ENCODE measurements at regions of chr12 and their contacts with region 1.

Region 1: GRCh38 chr12:110600254-110600653 is 13.7 kb upstream of the TCTN1 start:
- H3K4me3 ChIP-seq: no peak overlapping the region
- H3K27ac ChIP-seq: no peak overlapping the region
- H3K4me1 ChIP-seq: no peaks in the 10 kb centered on the region
- CTCF ChIP-seq: no peak

Region 2: GRCh38 chr12:110449799-110450497 is 150.3 kb before region 1 on chr12 and contains the start of gene ARPC3:
- CTCF ChIA-PET with region 1: interaction called, 51 read pairs
- POLR2A ChIA-PET with region 1: interaction called, 4 read pairs
- H3K4me3 ChIP-seq: peak within 1 kb of the TSS; percentile 73
- H3K27ac ChIP-seq: peak within 1 kb of the TSS; percentile 66
- H3K4me1 ChIP-seq: no peaks in the 10 kb centered on the region
- CTCF ChIP-seq: peak; percentile 96

Region 3: GRCh38 chr12:110468212-110469048 is 131.8 kb before region 1 on chr12 and contains the starts of genes FAM216A and GPN3:
- CTCF ChIA-PET with region 1: interaction called, 23 read pairs
- POLR2A ChIA-PET with region 1: interaction called, 4 read pairs
- H3K4me3 ChIP-seq: peak within 1 kb of the TSS; percentile 78
- H3K27ac ChIP-seq: peak within 1 kb of the TSS; percentile 93
- H3K4me1 ChIP-seq: peaks cover 5% of the 10 kb centered on the region; the same call in 1 of the 2 replicates
- CTCF ChIP-seq: no peak

Region 4: DNA sequence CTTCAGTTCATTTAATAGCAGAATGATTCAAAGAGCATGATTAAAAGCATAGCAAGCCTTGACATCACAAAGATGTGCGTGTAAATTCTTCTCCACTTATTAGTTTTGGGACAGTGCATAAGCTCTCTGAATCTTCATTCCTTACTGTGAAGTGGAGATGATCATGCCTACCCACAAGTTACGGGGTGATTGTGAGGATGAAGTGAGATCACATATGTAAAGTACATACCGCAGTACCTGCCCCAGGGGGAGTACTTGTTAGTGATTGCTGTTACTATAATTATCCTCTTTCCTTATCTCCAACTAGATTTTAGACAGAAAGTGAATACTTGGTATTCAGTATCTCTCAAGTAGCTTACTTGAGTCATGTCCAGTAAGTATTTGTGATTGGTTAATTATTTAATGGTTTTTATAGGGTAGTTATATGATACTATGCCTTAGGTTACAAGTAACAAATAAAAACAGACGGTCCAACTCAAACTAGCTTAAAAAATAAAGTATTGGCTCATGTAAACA is 92.1 kb before region 1 on chr12:
- CTCF ChIA-PET with region 1: interaction called, 45 read pairs
- POLR2A ChIA-PET with region 1: interaction called, 4 read pairs
- H3K4me3 ChIP-seq: no peak overlapping the region
- H3K27ac ChIP-seq: no peak overlapping the region
- H3K4me1 ChIP-seq: peaks cover 4% of the 10 kb centered on the region
- CTCF ChIP-seq: no peak

Region 5: GRCh38 chr12:110513842-110514241 is 86.4 kb before region 1 on chr12:
- CTCF ChIA-PET with region 1: interaction called, 45 read pairs
- POLR2A ChIA-PET with region 1: interaction called, 4 read pairs
- H3K4me3 ChIP-seq: no peak overlapping the region
- H3K27ac ChIP-seq: no peak overlapping the region
- H3K4me1 ChIP-seq: no peaks in the 10 kb centered on the region
- CTCF ChIP-seq: no peak

Region 6: DNA sequence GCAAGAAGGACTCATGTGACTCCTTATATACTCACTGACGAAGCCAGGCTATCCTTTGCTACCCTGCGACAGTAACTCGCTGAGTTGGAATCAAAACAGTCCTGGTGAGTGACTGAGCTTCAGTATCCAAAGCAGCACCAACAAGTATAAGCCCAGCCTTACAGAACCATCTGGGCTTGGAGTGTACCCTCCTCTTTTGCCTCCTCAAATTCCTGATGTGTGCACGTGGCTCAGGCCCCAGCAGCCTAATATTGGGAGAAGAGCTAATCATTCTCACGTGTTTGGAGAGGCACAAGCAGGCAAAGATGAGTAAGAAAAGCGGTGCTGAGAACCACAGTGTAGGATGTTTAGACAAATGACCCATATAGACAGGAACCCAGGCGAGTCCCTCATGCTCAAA is 51.6 kb before region 1 on chr12:
- CTCF ChIA-PET with region 1: interaction called, 32 read pairs
- POLR2A ChIA-PET with region 1: no interaction called
- H3K4me3 ChIP-seq: no peak overlapping the region
- H3K27ac ChIP-seq: no peak overlapping the region
- H3K4me1 ChIP-seq: peaks cover 19% of the 10 kb centered on the region
- CTCF ChIP-seq: no peak

Region 7: DNA sequence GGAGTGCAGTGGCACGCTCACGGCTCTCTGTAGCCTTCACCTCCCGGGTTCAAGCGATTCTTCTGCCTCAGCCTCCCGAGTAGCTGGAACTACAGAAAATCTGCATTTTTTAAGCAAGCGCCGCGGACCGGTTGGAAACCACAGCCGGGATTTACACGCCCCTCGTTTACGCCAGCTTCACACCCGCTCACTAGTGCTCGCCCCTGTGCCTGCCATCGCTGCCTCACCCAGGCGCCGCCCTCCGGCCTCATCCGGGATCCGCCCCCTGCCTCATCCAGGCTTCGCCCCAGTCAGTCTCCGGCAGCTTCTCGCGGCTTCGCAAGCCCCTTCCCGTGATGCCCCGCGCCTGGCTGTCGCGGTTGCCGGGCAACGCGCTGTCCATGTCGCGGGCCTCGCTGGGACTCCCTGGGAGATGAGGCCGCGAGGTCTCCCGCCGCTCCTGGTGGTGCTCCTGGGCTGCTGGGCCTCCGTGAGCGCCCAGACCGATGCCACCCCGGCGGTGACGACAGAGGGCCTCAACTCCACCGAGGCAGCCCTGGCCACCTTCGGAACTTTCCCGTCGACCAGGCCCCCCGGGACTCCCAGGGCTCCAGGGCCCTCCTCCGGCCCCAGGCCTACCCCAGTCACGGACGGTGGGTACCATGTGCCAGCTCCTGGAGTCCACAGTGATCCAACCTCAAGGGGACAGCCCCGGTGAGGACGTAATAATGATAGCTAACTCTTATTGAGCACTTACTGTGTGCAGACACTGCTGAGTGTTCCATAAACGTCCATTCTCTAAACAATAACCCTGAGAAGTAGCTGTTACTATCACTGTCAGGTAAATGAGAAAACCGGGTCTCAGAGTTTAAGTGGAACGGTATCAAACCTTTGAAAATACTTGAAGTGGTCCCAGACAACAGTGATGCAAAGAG is 13.8 kb after region 1 on chr12 and contains the start of gene TCTN1:
- CTCF ChIA-PET with region 1: interaction called, 42 read pairs
- POLR2A ChIA-PET with region 1: interaction called, 5 read pairs
- H3K4me3 ChIP-seq: peak within 1 kb of the TSS; percentile 80
- H3K27ac ChIP-seq: peak within 1 kb of the TSS; percentile 47; the same call in 1 of the 2 replicates
- H3K4me1 ChIP-seq: peaks cover 3% of the 10 kb centered on the region
- CTCF ChIP-seq: no peak

Region 8: DNA sequence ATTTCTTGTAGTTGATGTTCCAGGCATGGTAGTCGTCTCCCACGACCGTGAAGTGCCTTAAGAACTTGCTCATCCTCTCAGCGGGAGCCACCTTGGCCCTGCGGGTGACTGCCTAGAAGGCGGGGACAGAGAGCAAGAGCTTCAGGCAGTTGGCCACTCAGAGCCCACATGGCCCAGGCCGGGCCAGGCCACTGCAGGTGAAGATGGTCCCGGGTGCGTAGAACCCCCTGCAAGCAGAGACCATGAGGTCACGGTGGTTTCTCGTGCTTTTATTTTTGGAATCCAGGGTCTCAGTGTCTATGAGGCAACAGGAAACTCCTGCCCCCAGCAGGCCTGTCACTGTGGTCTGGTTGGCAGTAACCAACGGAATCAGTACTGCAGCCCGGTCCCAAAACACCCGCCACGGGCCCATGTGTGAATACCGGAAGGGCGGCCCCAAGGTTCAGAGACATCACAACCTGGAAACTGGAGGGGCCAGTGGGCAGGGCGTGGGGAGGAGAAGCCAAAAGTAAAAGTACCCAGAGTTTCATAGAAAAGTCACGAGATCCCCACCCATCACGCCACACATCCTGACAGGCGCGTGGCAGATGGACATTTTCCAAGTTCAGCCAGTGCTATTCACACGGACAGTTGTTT is 61.2 kb after region 1 on chr12:
- CTCF ChIA-PET with region 1: no interaction called
- POLR2A ChIA-PET with region 1: no interaction called
- H3K4me3 ChIP-seq: no peak overlapping the region
- H3K27ac ChIP-seq: no peak overlapping the region
- H3K4me1 ChIP-seq: no peaks in the 10 kb centered on the region
- CTCF ChIP-seq: no peak